ENCODE measurements at regions of chr6 and their contacts with region 1.

Region 1: GRCh38 chr6:132279592-132280139 is 121.6 kb downstream of the MOXD1 start:
- DNase-seq: peak; percentile 85
- ATAC-seq: peak; percentile 86
- H3K4me3 Mint-ChIP-seq: peak overlapping the region; percentile 60
- H3K27ac Mint-ChIP-seq: peak overlapping the region; percentile 40
- H3K4me1 Mint-ChIP-seq: no peaks in the 10 kb centered on the region
- H3K27me3 Mint-ChIP-seq: peaks cover 16% of the 10 kb centered on the region

Region 2: GRCh38 chr6:131914967-131915751 is 364.5 kb before region 1 on chr6:
- CTCF ChIA-PET with region 1: interaction called, 11 read pairs
- POLR2A ChIA-PET with region 1: no interaction called
- intact Hi-C with region 1: loop called in 1 of 2 experiments (anchors 5 kb)
- DNase-seq: peak; percentile 72
- ATAC-seq: peak; percentile 76
- H3K4me3 Mint-ChIP-seq: no peak overlapping the region
- H3K27ac Mint-ChIP-seq: no peak overlapping the region
- H3K4me1 Mint-ChIP-seq: peaks cover 9% of the 10 kb centered on the region
- H3K27me3 Mint-ChIP-seq: peaks cover 32% of the 10 kb centered on the region

Region 3: DNA sequence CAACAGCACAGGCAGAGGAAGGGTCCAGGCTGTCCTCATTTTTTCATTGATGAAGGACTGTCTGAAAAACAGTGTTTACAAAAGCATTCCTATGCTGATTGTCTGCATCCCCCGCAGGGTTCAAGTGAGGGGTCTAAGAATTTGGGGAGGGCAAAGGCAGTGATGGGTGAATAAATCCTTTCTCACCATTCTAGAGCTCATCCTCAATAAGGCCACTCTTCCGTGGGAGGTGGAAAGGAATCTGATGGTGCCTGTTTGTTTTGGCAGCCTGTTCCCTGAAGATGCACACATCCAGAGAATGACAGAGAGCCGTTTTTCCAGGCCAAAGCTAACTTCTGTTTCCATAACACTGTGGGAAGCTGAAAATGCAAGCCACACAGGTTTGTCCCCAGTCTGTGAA is 42.9 kb before region 1 on chr6:
- CTCF ChIA-PET with region 1: no interaction called
- POLR2A ChIA-PET with region 1: no interaction called
- intact Hi-C with region 1: no loop called
- DNase-seq: no peak
- ATAC-seq: no peak
- H3K4me3 Mint-ChIP-seq: no peak overlapping the region
- H3K27ac Mint-ChIP-seq: no peak overlapping the region
- H3K4me1 Mint-ChIP-seq: no peaks in the 10 kb centered on the region
- H3K27me3 Mint-ChIP-seq: peaks cover 7% of the 10 kb centered on the region

Region 4: GRCh38 chr6:132289756-132290155 is 10.1 kb after region 1 on chr6:
- CTCF ChIA-PET with region 1: interaction called, 137 read pairs
- POLR2A ChIA-PET with region 1: no interaction called
- intact Hi-C with region 1: no loop called
- DNase-seq: no peak
- ATAC-seq: no peak
- H3K4me3 Mint-ChIP-seq: no peak overlapping the region
- H3K27ac Mint-ChIP-seq: no peak overlapping the region
- H3K4me1 Mint-ChIP-seq: no peaks in the 10 kb centered on the region
- H3K27me3 Mint-ChIP-seq: peaks cover 2% of the 10 kb centered on the region

Region 5: GRCh38 chr6:132320007-132320406 is 40.3 kb after region 1 on chr6:
- CTCF ChIA-PET with region 1: interaction called, 16 read pairs
- POLR2A ChIA-PET with region 1: no interaction called
- intact Hi-C with region 1: no loop called
- DNase-seq: no peak
- ATAC-seq: no peak
- H3K4me3 Mint-ChIP-seq: no peak overlapping the region
- H3K27ac Mint-ChIP-seq: no peak overlapping the region
- H3K4me1 Mint-ChIP-seq: peaks cover 2% of the 10 kb centered on the region
- H3K27me3 Mint-ChIP-seq: peaks cover 8% of the 10 kb centered on the region

Region 6: DNA sequence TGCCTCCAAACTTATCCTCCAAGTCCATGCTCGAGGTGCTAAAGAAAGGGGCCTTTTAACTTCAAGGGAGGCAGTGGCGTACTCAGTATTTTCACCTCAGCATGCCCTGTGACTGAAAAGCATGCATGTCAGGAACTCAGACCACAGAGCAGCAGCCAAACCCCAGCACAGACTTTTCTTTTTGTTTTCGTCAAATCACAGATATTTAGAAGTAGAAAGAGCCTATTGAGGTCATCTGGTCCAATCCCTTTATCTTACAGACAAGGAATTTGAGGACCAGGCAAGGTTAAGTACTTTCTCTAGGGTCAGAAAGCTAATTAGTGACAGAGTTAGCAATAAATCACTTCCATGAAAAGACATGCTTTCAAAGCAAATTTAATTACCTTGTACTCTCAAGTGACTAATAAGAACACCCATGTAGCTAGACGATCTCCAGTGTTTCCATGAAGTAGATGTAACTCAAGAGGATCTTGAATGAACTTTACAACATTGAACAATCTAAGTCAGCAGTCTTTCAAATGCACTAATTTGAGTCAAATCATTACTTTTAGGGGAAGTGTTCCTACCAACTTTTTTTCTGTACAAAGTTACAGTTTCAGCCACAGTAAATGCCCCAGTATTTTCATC is 85.7 kb after region 1 on chr6:
- CTCF ChIA-PET with region 1: no interaction called
- POLR2A ChIA-PET with region 1: no interaction called
- intact Hi-C with region 1: no loop called
- DNase-seq: no peak
- ATAC-seq: peak; percentile 84
- H3K4me3 Mint-ChIP-seq: no peak overlapping the region
- H3K27ac Mint-ChIP-seq: no peak overlapping the region
- H3K4me1 Mint-ChIP-seq: peaks cover 12% of the 10 kb centered on the region
- H3K27me3 Mint-ChIP-seq: peaks cover 38% of the 10 kb centered on the region

Region 7: DNA sequence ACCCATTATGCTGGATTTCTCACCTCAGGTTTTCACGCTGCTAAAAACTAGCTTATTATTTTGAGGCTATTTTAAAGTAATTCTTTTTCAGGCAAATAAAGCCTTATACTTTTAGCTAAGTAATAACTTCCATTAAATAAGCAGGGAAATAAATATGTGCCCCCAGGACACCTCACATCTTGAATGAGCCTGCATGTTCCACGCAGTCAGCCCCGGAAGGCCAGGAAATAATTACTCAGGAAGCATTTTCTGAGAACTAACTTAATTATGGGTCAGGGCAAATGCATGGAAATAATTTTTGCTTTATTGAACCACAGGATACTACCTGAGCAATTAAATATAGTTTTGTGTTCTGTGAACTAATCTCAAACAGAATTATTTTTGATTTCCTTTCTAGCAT is 192.1 kb after region 1 on chr6:
- CTCF ChIA-PET with region 1: interaction called, 20 read pairs
- POLR2A ChIA-PET with region 1: no interaction called
- intact Hi-C with region 1: no loop called
- DNase-seq: no peak
- ATAC-seq: no peak
- H3K4me3 Mint-ChIP-seq: no peak overlapping the region
- H3K27ac Mint-ChIP-seq: no peak overlapping the region
- H3K4me1 Mint-ChIP-seq: no peaks in the 10 kb centered on the region
- H3K27me3 Mint-ChIP-seq: no peaks in the 10 kb centered on the region

Region 8: GRCh38 chr6:132495604-132496079 is 216.0 kb after region 1 on chr6:
- CTCF ChIA-PET with region 1: interaction called, 228 read pairs
- POLR2A ChIA-PET with region 1: no interaction called
- intact Hi-C with region 1: no loop called
- DNase-seq: no peak
- ATAC-seq: peak; percentile 39
- H3K4me3 Mint-ChIP-seq: no peak overlapping the region
- H3K27ac Mint-ChIP-seq: peak overlapping the region; percentile 27
- H3K4me1 Mint-ChIP-seq: peaks cover 44% of the 10 kb centered on the region
- H3K27me3 Mint-ChIP-seq: no peaks in the 10 kb centered on the region

Region 9: GRCh38 chr6:133202610-133203343 is 923.1 kb after region 1 on chr6:
- CTCF ChIA-PET with region 1: no interaction called
- POLR2A ChIA-PET with region 1: no interaction called
- intact Hi-C with region 1: no loop called
- DNase-seq: no peak
- ATAC-seq: no peak
- H3K4me3 Mint-ChIP-seq: no peak overlapping the region
- H3K27ac Mint-ChIP-seq: no peak overlapping the region
- H3K4me1 Mint-ChIP-seq: no peaks in the 10 kb centered on the region
- H3K27me3 Mint-ChIP-seq: no peaks in the 10 kb centered on the region

Measured in activated CD4-positive, alpha-beta T cell treated with anti-CD3 and anti-CD28 coated beads for 36 hours (primary cell).